SK-N-SH (cell line): ENCODE measurements at regions of chr5 and their contacts with region 1.

Region 1: DNA sequence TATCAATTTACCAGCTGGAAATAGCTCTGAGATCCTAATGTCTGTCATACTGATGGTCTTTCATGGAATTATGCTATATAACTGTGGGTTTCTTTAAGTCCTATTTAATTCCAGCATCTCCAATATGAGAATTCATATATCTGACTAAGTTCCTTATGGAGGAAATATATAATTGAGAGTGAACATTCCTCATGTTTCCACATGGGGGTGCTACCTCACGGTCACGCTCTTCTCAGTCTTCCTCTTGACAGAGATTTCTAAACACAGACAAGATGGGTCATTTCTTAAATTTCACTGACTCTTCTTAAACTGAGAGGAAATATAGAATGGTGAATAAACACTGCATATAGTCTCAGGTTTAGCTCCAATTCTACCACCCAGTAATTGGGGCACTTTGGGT is 212.1 kb downstream of the SLF1 start:
- DNase-seq: peak; percentile 11
- H3K4me3 ChIP-seq: no peak overlapping the region
- H3K27ac ChIP-seq: no peak overlapping the region
- H3K4me1 ChIP-seq: no peaks in the 10 kb centered on the region
- H3K27me3 ChIP-seq: no peaks in the 10 kb centered on the region
- CTCF ChIP-seq: peak; percentile 55
- EP300 ChIP-seq: no peak
- RAD21 ChIP-seq: peak; percentile 29; the same call in 1 of the 2 replicates

Region 2: DNA sequence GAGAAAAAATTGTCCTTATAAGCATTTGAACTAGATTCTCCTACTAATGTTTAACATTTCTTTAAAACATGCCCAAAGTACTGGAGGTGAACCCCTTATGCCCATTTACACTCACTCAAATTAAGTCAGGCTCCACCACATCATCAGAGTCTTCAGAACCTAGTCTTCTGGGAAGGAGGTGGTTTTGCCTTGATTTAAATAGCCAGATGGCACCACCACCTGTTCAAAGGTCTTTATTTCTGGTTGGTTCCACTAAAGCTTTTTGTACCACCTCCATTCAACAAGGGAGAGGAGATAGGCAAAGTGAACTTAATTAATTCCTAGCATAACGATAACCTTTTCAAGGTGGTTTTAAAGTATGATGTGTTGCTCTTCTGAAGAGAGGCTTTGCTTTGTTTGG is 22.5 kb before region 1 on chr5:
- CTCF ChIA-PET with region 1: interaction called, 17 read pairs
- POLR2A ChIA-PET with region 1: no interaction called
- DNase-seq: no peak
- H3K4me3 ChIP-seq: no peak overlapping the region
- H3K27ac ChIP-seq: no peak overlapping the region
- H3K4me1 ChIP-seq: no peaks in the 10 kb centered on the region
- H3K27me3 ChIP-seq: no peaks in the 10 kb centered on the region
- CTCF ChIP-seq: no peak
- EP300 ChIP-seq: no peak
- RAD21 ChIP-seq: no peak

Region 3: GRCh38 chr5:94841598-94842322 is 11.2 kb after region 1 on chr5:
- CTCF ChIA-PET with region 1: interaction called, 10 read pairs
- POLR2A ChIA-PET with region 1: no interaction called
- DNase-seq: no peak
- H3K4me3 ChIP-seq: no peak overlapping the region
- H3K27ac ChIP-seq: no peak overlapping the region
- H3K4me1 ChIP-seq: no peaks in the 10 kb centered on the region
- H3K27me3 ChIP-seq: no peaks in the 10 kb centered on the region
- CTCF ChIP-seq: no peak
- EP300 ChIP-seq: no peak
- RAD21 ChIP-seq: no peak